ENCODE measurements at regions of chr5 and their contacts with region 1.

Region 1: GRCh38 chr5:128667152-128667551 is 129.1 kb upstream of the FBN2 start:
- DNase-seq: no peak
- ATAC-seq: no peak

Region 2: GRCh38 chr5:128111818-128112448 is 555.2 kb before region 1 on chr5:
- intact Hi-C with region 1: no loop called
- DNase-seq: no peak
- ATAC-seq: no peak

Region 3: GRCh38 chr5:128574036-128574435 is 93.1 kb before region 1 on chr5:
- intact Hi-C with region 1: no loop called
- DNase-seq: no peak
- ATAC-seq: no peak

Region 4: GRCh38 chr5:128799945-128800344 is 132.8 kb after region 1 on chr5:
- intact Hi-C with region 1: no loop called
- DNase-seq: no peak
- ATAC-seq: no peak

Region 5: GRCh38 chr5:128844354-128844923 is 177.3 kb after region 1 on chr5:
- intact Hi-C with region 1: loop called in 1 of 2 experiments (anchors 5 kb)
- DNase-seq: no peak
- ATAC-seq: no peak

Measured in left cardiac atrium (tissue), 4 donors.